Caco-2 (cell line): ENCODE measurements at regions of chr3 and their contacts with region 1.

Region 1: DNA sequence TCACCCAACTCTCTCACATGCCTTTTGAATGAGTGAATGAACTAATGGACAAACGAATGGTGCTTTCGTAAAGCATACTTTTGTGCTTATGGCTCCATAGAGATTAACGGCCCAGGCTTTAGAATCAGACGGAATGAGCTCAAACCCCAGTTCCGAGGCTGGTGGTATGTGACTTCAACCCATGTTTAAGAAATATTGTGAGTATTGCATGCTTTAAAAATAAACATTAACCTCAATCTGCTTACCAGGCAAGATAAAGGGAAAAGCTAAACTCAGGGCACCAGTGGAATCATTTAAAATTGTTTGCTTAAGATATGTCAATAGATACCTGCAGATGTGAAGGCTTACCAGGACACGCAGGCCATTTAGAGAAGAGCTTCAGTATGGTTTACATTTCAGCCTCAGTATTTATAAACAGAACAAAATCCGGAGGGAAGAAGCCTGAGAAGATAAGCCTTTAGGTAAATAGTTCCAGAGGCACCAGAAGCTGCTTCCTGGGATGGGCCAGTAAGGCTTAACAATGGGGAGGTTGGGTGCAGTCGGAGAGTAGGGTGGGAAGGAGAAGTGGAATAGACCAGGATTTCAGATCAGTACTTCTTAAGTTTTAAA is 186.4 kb downstream of the ADAMTS9 start:
- DNase-seq: peak; percentile 67 to 71
- H3K4me3 ChIP-seq: no peak overlapping the region
- H3K4me3 Mint-ChIP-seq: peak overlapping the region; percentile 22
- H3K27ac Mint-ChIP-seq: no peak overlapping the region
- H3K4me1 ChIP-seq: peaks cover 24% of the 10 kb centered on the region
- H3K4me1 Mint-ChIP-seq: peaks cover 24% of the 10 kb centered on the region
- H3K27me3 ChIP-seq: no peaks in the 10 kb centered on the region
- H3K27me3 Mint-ChIP-seq: peaks cover 8% of the 10 kb centered on the region
- CTCF ChIP-seq: no peak

Region 2: DNA sequence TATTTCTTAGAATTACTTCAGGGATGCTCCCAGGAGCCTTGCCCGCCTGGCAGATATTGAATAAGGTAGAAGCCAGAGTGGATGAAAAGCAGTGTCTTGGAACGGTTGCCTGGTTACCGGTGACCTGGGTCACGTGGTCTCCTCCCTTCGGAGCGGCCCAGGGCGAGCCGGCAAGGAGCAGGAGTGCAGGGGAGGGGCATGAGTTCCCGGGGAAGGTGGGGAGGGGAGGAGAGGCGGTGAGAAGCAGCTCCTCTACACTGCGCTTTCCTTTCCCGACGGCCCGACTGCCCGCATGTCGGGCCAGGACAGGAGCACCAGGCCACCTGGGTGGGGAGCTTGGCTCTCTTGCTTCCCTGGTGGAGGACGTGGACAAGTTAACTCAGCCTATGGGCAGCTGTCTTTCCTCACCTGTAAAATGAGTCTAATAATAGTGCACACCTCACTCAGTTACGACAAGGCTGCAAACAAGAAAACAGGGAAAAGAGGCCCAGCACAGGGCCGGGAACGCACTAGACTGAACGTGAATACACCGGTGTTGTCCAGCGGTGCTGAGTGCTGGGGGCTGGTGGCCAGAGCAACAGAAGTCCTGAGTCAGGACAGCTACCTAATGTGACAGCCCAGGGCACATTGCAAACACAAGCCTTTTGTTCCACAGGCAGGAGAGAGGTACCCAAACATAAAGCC is 11.9 kb before region 1 on chr3:
- CTCF ChIA-PET with region 1: interaction called, 7 read pairs
- POLR2A ChIA-PET with region 1: no interaction called
- intact Hi-C with region 1: loop called (anchors 1 kb)
- DNase-seq: peak; percentile 72 to 78
- H3K4me3 ChIP-seq: peak overlapping the region; percentile 26
- H3K4me3 Mint-ChIP-seq: peak overlapping the region; percentile 56
- H3K27ac Mint-ChIP-seq: no peak overlapping the region
- H3K4me1 ChIP-seq: peaks cover 32% of the 10 kb centered on the region
- H3K4me1 Mint-ChIP-seq: peaks cover 21% of the 10 kb centered on the region
- H3K27me3 ChIP-seq: peaks cover 1% of the 10 kb centered on the region; the same call in 1 of the 2 replicates
- H3K27me3 Mint-ChIP-seq: no peaks in the 10 kb centered on the region
- CTCF ChIP-seq: no peak

Region 3: GRCh38 chr3:64575211-64575844 is 73.9 kb after region 1 on chr3:
- CTCF ChIA-PET with region 1: no interaction called
- POLR2A ChIA-PET with region 1: no interaction called
- intact Hi-C with region 1: no loop called
- DNase-seq: peak in 1 of 2 experiments; percentile 22
- H3K4me3 ChIP-seq: no peak overlapping the region
- H3K4me3 Mint-ChIP-seq: no peak overlapping the region
- H3K27ac Mint-ChIP-seq: no peak overlapping the region
- H3K4me1 ChIP-seq: peaks cover 19% of the 10 kb centered on the region
- H3K4me1 Mint-ChIP-seq: peaks cover 14% of the 10 kb centered on the region
- H3K27me3 ChIP-seq: no peaks in the 10 kb centered on the region
- H3K27me3 Mint-ChIP-seq: no peaks in the 10 kb centered on the region
- CTCF ChIP-seq: peak; percentile 52 to 63

Region 4: DNA sequence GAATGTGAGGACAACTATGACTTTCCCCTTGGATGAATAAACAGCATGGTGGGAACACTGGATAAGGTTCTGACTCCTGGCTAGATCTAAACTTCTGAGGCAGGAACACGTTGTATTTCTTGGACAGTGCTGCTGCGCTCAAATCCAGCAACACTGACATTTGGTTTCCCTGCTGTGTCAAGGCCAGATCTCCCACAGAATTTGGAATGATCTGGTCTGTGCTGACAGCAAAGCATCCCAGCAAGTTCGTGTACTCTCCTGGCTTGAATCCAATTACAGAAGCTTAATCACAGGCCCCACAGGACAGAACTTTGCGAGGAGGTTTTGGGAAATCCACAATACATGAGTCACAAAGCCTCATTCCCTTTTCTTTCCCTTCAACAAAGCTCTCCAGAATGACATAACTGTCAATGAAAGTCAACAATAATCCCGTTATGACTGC is 93.9 kb after region 1 on chr3:
- CTCF ChIA-PET with region 1: no interaction called
- POLR2A ChIA-PET with region 1: no interaction called
- intact Hi-C with region 1: no loop called
- DNase-seq: no peak
- H3K4me3 ChIP-seq: no peak overlapping the region
- H3K4me3 Mint-ChIP-seq: no peak overlapping the region
- H3K27ac Mint-ChIP-seq: no peak overlapping the region
- H3K4me1 ChIP-seq: no peaks in the 10 kb centered on the region
- H3K4me1 Mint-ChIP-seq: no peaks in the 10 kb centered on the region
- H3K27me3 ChIP-seq: no peaks in the 10 kb centered on the region
- H3K27me3 Mint-ChIP-seq: no peaks in the 10 kb centered on the region
- CTCF ChIP-seq: no peak

Region 5: GRCh38 chr3:64651741-64652241 is 150.4 kb after region 1 on chr3:
- CTCF ChIA-PET with region 1: no interaction called
- POLR2A ChIA-PET with region 1: no interaction called
- intact Hi-C with region 1: no loop called
- DNase-seq: no peak
- H3K4me3 ChIP-seq: no peak overlapping the region
- H3K4me3 Mint-ChIP-seq: no peak overlapping the region
- H3K27ac Mint-ChIP-seq: no peak overlapping the region
- H3K4me1 ChIP-seq: peaks cover 4% of the 10 kb centered on the region; the same call in 1 of the 2 replicates
- H3K4me1 Mint-ChIP-seq: peaks cover 13% of the 10 kb centered on the region
- H3K27me3 ChIP-seq: no peaks in the 10 kb centered on the region
- H3K27me3 Mint-ChIP-seq: no peaks in the 10 kb centered on the region
- CTCF ChIP-seq: no peak